H1 (cell line): ENCODE measurements at regions of chr11 and their contacts with region 1.

Region 1: GRCh38 chr11:16785520-16786128 is 47.2 kb downstream of the C11orf58 start:
- DNase-seq: peak in 1 of 2 experiments; percentile 76
- H3K4me3 ChIP-seq: no peak overlapping the region
- H3K27ac ChIP-seq: no peak overlapping the region
- H3K4me1 ChIP-seq: no peaks in the 10 kb centered on the region
- H3K27me3 ChIP-seq: no peaks in the 10 kb centered on the region
- CTCF ChIP-seq: peak; percentile 75 to 93 (median 88)
- EP300 ChIP-seq: no peak
- POLR2A ChIP-seq: no peak
- RAD21 ChIP-seq: peak; percentile 83 to 88

Region 2: GRCh38 chr11:16773981-16774935 is 11.4 kb before region 1 on chr11:
- CTCF ChIA-PET with region 1: interaction called, 17 read pairs
- POLR2A ChIA-PET with region 1: no interaction called
- DNase-seq: no peak
- H3K4me3 ChIP-seq: no peak overlapping the region
- H3K27ac ChIP-seq: no peak overlapping the region; the same call in 1 of the 2 replicates
- H3K4me1 ChIP-seq: no peaks in the 10 kb centered on the region
- H3K27me3 ChIP-seq: no peaks in the 10 kb centered on the region
- CTCF ChIP-seq: no peak
- EP300 ChIP-seq: no peak
- POLR2A ChIP-seq: no peak
- RAD21 ChIP-seq: no peak

Region 3: GRCh38 chr11:16809886-16810668 is 24.5 kb after region 1 on chr11:
- CTCF ChIA-PET with region 1: interaction called, 100 read pairs
- POLR2A ChIA-PET with region 1: no interaction called
- DNase-seq: no peak
- H3K4me3 ChIP-seq: no peak overlapping the region
- H3K27ac ChIP-seq: no peak overlapping the region
- H3K4me1 ChIP-seq: peaks cover 0 to 2% (median under 1%) of the 10 kb centered on the region in 4 experiments; a peak in 1 of 7 replicates
- H3K27me3 ChIP-seq: no peaks in the 10 kb centered on the region
- CTCF ChIP-seq: no peak
- EP300 ChIP-seq: no peak
- POLR2A ChIP-seq: no peak
- RAD21 ChIP-seq: no peak

Region 4: GRCh38 chr11:16921019-16921418 is 135.4 kb after region 1 on chr11:
- CTCF ChIA-PET with region 1: interaction called, 18 read pairs
- POLR2A ChIA-PET with region 1: no interaction called
- DNase-seq: no peak
- H3K4me3 ChIP-seq: no peak overlapping the region
- H3K27ac ChIP-seq: no peak overlapping the region
- H3K4me1 ChIP-seq: peaks cover 8 to 21% (median 17%) of the 10 kb centered on the region in 4 experiments
- H3K27me3 ChIP-seq: peaks cover 1 to 29% (median 19%) of the 10 kb centered on the region in 4 experiments
- CTCF ChIP-seq: no peak
- EP300 ChIP-seq: no peak
- POLR2A ChIP-seq: no peak
- RAD21 ChIP-seq: no peak

Region 5: GRCh38 chr11:17063171-17064002 is 277.8 kb after region 1 on chr11:
- CTCF ChIA-PET with region 1: interaction called, 119 read pairs
- POLR2A ChIA-PET with region 1: no interaction called
- DNase-seq: peak; percentile 46 to 93
- H3K4me3 ChIP-seq: no peak overlapping the region
- H3K27ac ChIP-seq: no peak overlapping the region
- H3K4me1 ChIP-seq: no peaks in the 10 kb centered on the region
- H3K27me3 ChIP-seq: no peaks in the 10 kb centered on the region
- CTCF ChIP-seq: peak; percentile 84 to 97 (median 92)
- EP300 ChIP-seq: no peak
- POLR2A ChIP-seq: no peak
- RAD21 ChIP-seq: peak; percentile 99 to 100